AG04449 (cell line): ENCODE measurements at regions of chr17 and their contacts with region 1.

Region 1: GRCh38 chr17:16353317-16354174 is at the start of gene CENPV:
- DNase-seq: no peak
- H3K4me3 ChIP-seq: peak within 1 kb of the TSS; percentile 67
- CTCF ChIP-seq: no peak

Region 2: DNA sequence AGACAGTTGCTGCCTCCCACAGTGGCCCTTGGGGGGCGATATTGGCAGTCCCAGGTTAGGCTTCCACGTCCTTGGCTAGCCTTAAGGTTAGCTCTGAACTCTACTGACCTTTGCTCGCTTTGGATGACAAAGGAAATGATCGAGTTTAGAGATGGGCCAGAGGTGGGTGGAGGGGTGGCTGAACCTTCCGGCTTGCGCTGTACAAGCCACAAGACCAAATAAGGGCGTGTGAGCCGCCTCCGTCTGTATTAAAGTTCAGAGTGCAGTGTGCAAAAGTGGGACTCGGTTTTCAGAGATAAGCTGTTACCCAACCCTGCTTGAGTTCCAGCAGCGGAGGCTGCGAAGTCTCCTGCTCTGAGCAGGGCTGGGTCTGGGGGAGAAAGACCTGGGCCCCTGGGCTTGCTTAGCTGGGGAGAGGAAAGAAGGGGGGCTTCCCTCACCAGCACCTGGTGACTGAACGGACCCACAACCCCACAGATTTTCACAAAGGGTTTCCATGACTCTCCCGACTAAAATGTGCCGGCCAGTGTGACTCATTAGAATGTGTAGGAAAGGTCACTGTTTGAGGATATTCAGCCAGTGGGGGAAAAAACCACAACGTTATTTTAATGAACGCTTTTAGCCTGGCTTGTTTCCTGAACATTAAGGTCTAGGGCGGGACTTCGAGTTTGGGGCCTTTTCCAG is 67.4 kb before region 1 on chr17:
- CTCF ChIA-PET with region 1: interaction called, 14 read pairs
- POLR2A ChIA-PET with region 1: interaction called, 6 read pairs
- DNase-seq: peak; percentile 88
- H3K4me3 ChIP-seq: peak overlapping the region; percentile 51
- CTCF ChIP-seq: peak; percentile 42

Region 3: GRCh38 chr17:16342979-16343378 is 10.6 kb before region 1 on chr17:
- CTCF ChIA-PET with region 1: interaction called, 25 read pairs
- POLR2A ChIA-PET with region 1: interaction called, 3 read pairs
- DNase-seq: no peak
- H3K4me3 ChIP-seq: no peak overlapping the region
- CTCF ChIP-seq: no peak

Region 4: GRCh38 chr17:16470265-16470664 is 116.7 kb after region 1 on chr17:
- CTCF ChIA-PET with region 1: no interaction called
- POLR2A ChIA-PET with region 1: no interaction called
- DNase-seq: no peak
- H3K4me3 ChIP-seq: no peak overlapping the region
- CTCF ChIP-seq: no peak